ENCODE measurements at regions of chr10 and their contacts with region 1.

Region 1: GRCh38 chr10:66591865-66592264 is 334.0 kb upstream of the LRRTM3 start:
- DNase-seq: peak; percentile 98
- ATAC-seq: peak; percentile 83
- H3K4me3 ChIP-seq: no peak overlapping the region
- H3K27ac ChIP-seq: 0 out of 2 replicates have a peak overlapping the region, but pooled peaks have one; percentile 1
- H3K4me1 ChIP-seq: peaks cover 18% of the 10 kb centered on the region
- H3K27me3 ChIP-seq: no peaks in the 10 kb centered on the region
- CTCF ChIP-seq: no peak

Region 2: DNA sequence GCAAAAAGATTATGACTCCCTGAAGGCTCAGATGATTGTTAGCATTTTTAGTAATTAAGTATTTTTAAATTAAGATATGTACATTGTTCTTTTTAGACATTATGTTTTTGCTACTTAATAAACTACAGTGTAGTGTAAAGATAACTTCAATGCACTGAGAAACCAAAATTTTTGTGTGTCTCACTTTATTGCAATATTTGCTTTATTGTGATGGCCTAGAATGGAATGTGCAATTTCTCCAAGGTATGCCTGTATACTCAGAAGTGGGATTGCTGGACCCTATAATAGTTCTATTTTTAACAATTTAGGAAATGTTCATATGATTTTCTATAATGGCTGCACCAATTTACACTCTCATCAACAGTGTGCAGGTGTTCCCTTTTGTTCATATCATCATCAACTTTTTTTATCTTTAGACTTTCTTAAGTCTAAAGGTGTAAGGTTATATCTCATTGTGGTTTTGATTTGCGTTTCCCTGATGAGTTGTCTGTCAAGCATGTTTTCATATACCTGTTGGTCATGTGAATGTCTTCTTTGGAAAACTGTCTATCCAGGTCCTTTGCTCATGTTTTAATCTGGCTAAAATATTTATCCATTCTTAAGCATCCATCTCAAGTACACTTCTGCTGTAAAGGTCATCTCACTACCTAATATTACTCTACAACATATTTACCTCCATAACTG is 989.5 kb before region 1 on chr10:
- CTCF ChIA-PET with region 1: no interaction called
- POLR2A ChIA-PET with region 1: no interaction called
- intact Hi-C with region 1: no loop called
- DNase-seq: peak; percentile 61
- ATAC-seq: peak; percentile 74
- H3K4me3 ChIP-seq: no peak overlapping the region
- H3K27ac ChIP-seq: no peak overlapping the region
- H3K4me1 ChIP-seq: peaks cover 10% of the 10 kb centered on the region
- H3K27me3 ChIP-seq: no peaks in the 10 kb centered on the region
- CTCF ChIP-seq: no peak

Region 3: GRCh38 chr10:66513504-66513903 is 78.4 kb before region 1 on chr10:
- CTCF ChIA-PET with region 1: no interaction called
- POLR2A ChIA-PET with region 1: no interaction called
- intact Hi-C with region 1: loop called (anchors 1 kb)
- DNase-seq: no peak
- ATAC-seq: no peak
- H3K4me3 ChIP-seq: no peak overlapping the region
- H3K27ac ChIP-seq: no peak overlapping the region
- H3K4me1 ChIP-seq: peaks cover 20% of the 10 kb centered on the region
- H3K27me3 ChIP-seq: no peaks in the 10 kb centered on the region
- CTCF ChIP-seq: no peak

Region 4: GRCh38 chr10:66519616-66520015 is 72.2 kb before region 1 on chr10:
- CTCF ChIA-PET with region 1: no interaction called
- POLR2A ChIA-PET with region 1: no interaction called
- intact Hi-C with region 1: loop called (anchors 1 kb)
- DNase-seq: peak; percentile 97
- ATAC-seq: peak; percentile 70
- H3K4me3 ChIP-seq: no peak overlapping the region
- H3K27ac ChIP-seq: peak overlapping the region; percentile 29
- H3K4me1 ChIP-seq: peaks cover 24% of the 10 kb centered on the region
- H3K27me3 ChIP-seq: no peaks in the 10 kb centered on the region
- CTCF ChIP-seq: no peak

Region 5: DNA sequence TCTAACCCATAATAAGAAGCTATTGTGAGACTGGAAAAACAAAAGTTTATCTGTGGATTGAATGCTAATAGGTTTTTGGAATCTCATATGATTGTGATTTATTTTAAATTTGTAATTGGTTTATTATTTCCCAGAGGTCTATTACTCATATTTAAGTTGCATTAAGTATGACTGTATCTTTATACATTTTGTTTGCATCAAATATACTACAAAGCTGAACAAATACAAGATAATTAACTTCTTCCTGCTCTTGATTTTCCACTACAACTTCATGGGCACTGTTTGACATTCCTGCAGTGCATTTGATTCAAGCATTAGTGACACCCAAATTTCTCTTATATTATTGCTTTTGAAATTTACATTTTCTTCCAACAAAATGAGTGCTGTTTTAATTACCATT is 30.2 kb after region 1 on chr10:
- CTCF ChIA-PET with region 1: interaction called, 3 read pairs
- POLR2A ChIA-PET with region 1: no interaction called
- intact Hi-C with region 1: loop called (anchors 1 kb)
- DNase-seq: peak; percentile 71
- ATAC-seq: peak; percentile 81
- H3K4me3 ChIP-seq: no peak overlapping the region
- H3K27ac ChIP-seq: peak overlapping the region; percentile 13
- H3K4me1 ChIP-seq: peaks cover 34% of the 10 kb centered on the region
- H3K27me3 ChIP-seq: no peaks in the 10 kb centered on the region
- CTCF ChIP-seq: no peak

Measured in PC-3 (cell line).